Heart left ventricle (tissue), 16 donors: ENCODE measurements at regions of chr3 and their contacts with region 1.

Region 1: GRCh38 chr3:171459942-171460724 is at the start of gene TNIK:
- DNase-seq: peak; percentile 93 to 96 (median 94)
- ATAC-seq: peak; percentile 94 to 98 (median 96)
- H3K4me3 ChIP-seq: peak within 1 kb of the TSS; percentile 62 to 83 (median 76)
- H3K27ac ChIP-seq: peak within 1 kb of the TSS; percentile 59 to 92 (median 84)
- H3K4me1 ChIP-seq: peaks cover 0 to 56% (median 14%) of the 10 kb centered on the region in 12 donors
- H3K27me3 ChIP-seq: peaks cover 0 to 11% (median 0%) of the 10 kb centered on the region in 9 donors
- CTCF ChIP-seq: peak in 1 of 12 donors; percentile 19
- POLR2A ChIP-seq: peak in 1 of 2 donors; percentile 60
- total RNA-seq, gene TNIK: 12.3 to 51.6 (median 32.4) TPM

Region 2: GRCh38 chr3:171049861-171050444 is 410.2 kb before region 1 on chr3:
- intact Hi-C with region 1: loop called in 1 of 10 experiments (anchors 10 kb)
- DNase-seq: peak in 4 of 5 donors; percentile 16 to 40 (median 30)
- ATAC-seq: peak in 3 of 4 donors; percentile 68 to 83 (median 80)
- H3K4me3 ChIP-seq: no peak overlapping the region
- H3K27ac ChIP-seq: no peak overlapping the region
- H3K4me1 ChIP-seq: peaks cover 0 to 2% (median 0%) of the 10 kb centered on the region in 12 donors
- H3K27me3 ChIP-seq: no peaks in the 10 kb centered on the region
- CTCF ChIP-seq: peak; percentile 41 to 68 (median 55)
- POLR2A ChIP-seq: no peak

Region 3: DNA sequence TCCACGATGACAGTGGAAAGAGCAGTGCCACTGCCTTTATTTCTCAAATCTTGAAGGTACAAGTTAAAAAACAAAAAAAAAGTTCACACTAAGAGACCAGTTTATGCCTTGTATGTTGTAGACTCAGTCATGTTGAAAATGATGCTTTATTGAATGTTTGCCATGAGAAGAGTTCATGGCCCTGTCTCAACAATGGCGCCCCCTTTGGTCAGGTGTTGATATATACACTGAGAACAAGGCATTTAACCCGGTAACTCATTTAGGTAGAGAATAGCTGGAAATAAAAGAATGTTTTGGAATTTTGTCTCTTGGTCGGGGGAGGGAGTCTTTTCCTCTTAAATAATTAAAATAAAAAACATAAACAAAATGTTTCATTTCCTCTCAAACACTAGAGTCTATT is 288.1 kb before region 1 on chr3:
- intact Hi-C with region 1: loop called in 2 of 10 experiments (anchors 5 to 10 kb)
- DNase-seq: no peak
- ATAC-seq: no peak
- H3K4me3 ChIP-seq: no peak overlapping the region
- H3K27ac ChIP-seq: no peak overlapping the region
- H3K4me1 ChIP-seq: peaks cover 0 to 32% (median 15%) of the 10 kb centered on the region in 12 donors
- H3K27me3 ChIP-seq: no peaks in the 10 kb centered on the region
- CTCF ChIP-seq: peak in 6 of 12 donors; percentile 6 to 26 (median 16)
- POLR2A ChIP-seq: no peak

Region 4: DNA sequence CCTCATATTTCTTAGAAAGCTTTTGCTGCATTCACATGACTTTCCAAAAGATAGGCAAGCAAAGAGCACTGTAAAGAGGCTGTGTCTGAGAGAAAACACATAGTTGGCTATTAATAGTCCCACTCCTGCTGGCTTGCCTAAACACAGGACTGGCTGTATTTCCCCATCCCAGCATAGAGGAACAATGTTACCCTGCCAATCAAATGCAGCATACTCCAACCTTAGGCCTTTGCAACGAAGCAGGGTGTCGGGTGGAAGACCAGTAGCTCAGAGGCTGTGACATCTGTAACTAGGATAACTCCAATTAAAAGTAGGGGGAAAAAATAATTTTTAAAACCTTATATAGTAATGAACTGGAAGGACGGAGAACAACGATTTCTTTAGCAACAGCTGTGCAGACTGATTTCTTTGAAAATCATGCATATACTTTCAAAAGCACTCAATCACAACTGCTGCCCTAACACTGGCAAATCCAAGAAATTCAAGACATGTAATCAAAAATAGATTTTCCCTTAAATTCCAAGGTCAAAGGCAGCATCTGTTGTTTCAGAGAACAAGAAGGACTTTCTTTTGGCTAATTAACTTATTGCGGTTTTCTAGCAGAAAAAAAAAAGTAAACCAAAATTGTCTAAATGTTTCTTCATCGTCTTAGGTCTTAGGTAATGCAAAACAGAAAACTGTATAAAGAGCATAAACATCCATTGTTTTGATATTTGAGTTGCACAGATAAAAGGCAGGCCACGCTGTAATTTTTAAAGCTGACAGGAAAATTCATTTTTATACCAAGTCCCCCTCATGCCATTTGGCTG is 139.2 kb before region 1 on chr3:
- intact Hi-C with region 1: loop called in 7 of 10 experiments (anchors 5 to 10 kb)
- DNase-seq: peak in 4 of 5 donors; percentile 43 to 65 (median 52)
- ATAC-seq: peak; percentile 94 to 97 (median 95)
- H3K4me3 ChIP-seq: peak overlapping the region in 2 of 12 donors; percentile 0 to 1
- H3K27ac ChIP-seq: peak overlapping the region in 10 of 12 donors; percentile 9 to 69 (median 47)
- H3K4me1 ChIP-seq: peaks cover 0 to 52% (median 37%) of the 10 kb centered on the region in 12 donors
- H3K27me3 ChIP-seq: no peaks in the 10 kb centered on the region
- CTCF ChIP-seq: no peak
- POLR2A ChIP-seq: no peak

Region 5: DNA sequence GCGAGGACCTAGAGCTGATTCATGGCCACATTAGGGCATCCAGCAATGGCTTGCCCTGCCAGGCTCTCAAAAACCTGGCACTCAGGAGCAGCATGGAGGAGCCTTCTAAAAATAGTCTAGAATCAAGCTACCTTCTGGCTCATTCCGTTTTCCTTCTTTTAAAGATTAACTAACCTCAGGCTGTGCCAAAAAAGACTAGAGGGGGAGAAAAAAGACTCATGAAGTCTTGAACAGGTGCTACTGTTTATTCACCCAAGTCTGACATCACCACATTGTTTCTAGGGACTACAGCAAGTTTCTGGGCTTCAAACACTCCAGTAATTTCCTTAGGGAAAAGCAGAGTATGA is 125.7 kb before region 1 on chr3:
- intact Hi-C with region 1: loop called in 5 of 10 experiments (anchors 5 to 10 kb)
- DNase-seq: peak in 4 of 5 donors; percentile 33 to 77 (median 64)
- ATAC-seq: peak; percentile 89 to 93 (median 92)
- H3K4me3 ChIP-seq: no peak overlapping the region
- H3K27ac ChIP-seq: peak overlapping the region in 10 of 12 donors; percentile 0 to 83 (median 64)
- H3K4me1 ChIP-seq: peaks cover 0 to 45% (median 16%) of the 10 kb centered on the region in 12 donors
- H3K27me3 ChIP-seq: no peaks in the 10 kb centered on the region
- CTCF ChIP-seq: no peak
- POLR2A ChIP-seq: no peak

Region 6: DNA sequence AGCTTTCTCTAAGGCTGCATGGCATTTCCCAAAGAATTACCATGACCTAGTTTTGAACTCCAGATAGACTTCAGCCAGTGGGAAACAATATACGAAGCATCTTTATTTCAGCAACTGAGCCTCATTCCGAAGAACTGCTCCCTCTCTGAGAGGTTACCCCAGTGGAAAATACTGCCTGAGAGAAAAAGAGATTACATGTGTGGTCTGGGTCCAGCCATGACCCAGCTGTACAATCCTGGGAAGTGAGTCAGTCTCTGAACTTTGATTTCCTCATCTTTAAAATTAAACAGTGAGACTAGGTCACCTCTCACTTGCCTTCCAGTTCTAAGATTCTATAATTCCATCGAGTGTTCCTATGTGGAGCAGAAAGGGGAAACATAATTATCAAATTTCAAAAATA is 42.3 kb before region 1 on chr3:
- intact Hi-C with region 1: loop called in 2 of 10 experiments (anchors 5 kb)
- DNase-seq: peak in 2 of 5 donors; percentile 17 to 60
- ATAC-seq: peak; percentile 51 to 87 (median 78)
- H3K4me3 ChIP-seq: no peak overlapping the region
- H3K27ac ChIP-seq: peak overlapping the region in 9 of 12 donors; percentile 25 to 64 (median 39)
- H3K4me1 ChIP-seq: peaks cover 2 to 52% (median 23%) of the 10 kb centered on the region in 12 donors
- H3K27me3 ChIP-seq: no peaks in the 10 kb centered on the region
- CTCF ChIP-seq: no peak
- POLR2A ChIP-seq: no peak

Region 7: GRCh38 chr3:171561596-171562323 is 101.6 kb after region 1 on chr3:
- intact Hi-C with region 1: loop called in 5 of 10 experiments (anchors 5 to 10 kb)
- DNase-seq: no peak
- ATAC-seq: no peak
- H3K4me3 ChIP-seq: no peak overlapping the region
- H3K27ac ChIP-seq: no peak overlapping the region
- H3K4me1 ChIP-seq: peaks cover 0 to 26% (median 8%) of the 10 kb centered on the region in 12 donors
- H3K27me3 ChIP-seq: no peaks in the 10 kb centered on the region
- CTCF ChIP-seq: no peak
- POLR2A ChIP-seq: no peak